ENCODE measurements at regions of chr22 and their contacts with region 1.

Region 1: GRCh38 chr22:36194971-36195370 is 6.6 kb downstream of the APOL4 start:
- DNase-seq: peak; percentile 83
- H3K4me3 Mint-ChIP-seq: no peak overlapping the region
- H3K27ac Mint-ChIP-seq: no peak overlapping the region
- H3K4me1 Mint-ChIP-seq: peaks cover 21% of the 10 kb centered on the region
- H3K27me3 Mint-ChIP-seq: peaks cover 11% of the 10 kb centered on the region

Region 2: GRCh38 chr22:36234919-36235318 is 39.9 kb after region 1 on chr22:
- intact Hi-C with region 1: no loop called
- DNase-seq: no peak
- H3K4me3 Mint-ChIP-seq: peak overlapping the region; percentile 91
- H3K27ac Mint-ChIP-seq: peak overlapping the region; percentile 81
- H3K4me1 Mint-ChIP-seq: peaks cover 50% of the 10 kb centered on the region
- H3K27me3 Mint-ChIP-seq: no peaks in the 10 kb centered on the region

Region 3: DNA sequence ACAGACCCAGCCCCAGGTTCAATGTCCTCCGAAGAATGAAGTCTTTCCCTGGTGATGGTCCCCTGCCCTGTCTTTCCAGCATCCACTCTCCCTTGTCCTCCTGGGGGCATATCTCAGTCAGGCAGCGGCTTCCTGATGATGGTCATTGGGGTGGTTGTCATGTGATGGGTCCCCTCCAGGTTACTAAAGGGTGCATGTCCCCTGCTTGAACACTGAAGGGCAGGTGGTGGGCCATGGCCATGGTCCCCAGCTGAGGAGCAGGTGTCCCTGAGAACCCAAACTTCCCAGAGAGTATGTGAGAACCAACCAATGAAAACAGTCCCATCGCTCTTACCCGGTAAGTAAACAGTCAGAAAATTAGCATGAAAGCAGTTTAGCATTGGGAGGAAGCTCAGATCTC is 72.1 kb after region 1 on chr22:
- intact Hi-C with region 1: no loop called
- DNase-seq: no peak
- H3K4me3 Mint-ChIP-seq: no peak overlapping the region
- H3K27ac Mint-ChIP-seq: no peak overlapping the region
- H3K4me1 Mint-ChIP-seq: no peaks in the 10 kb centered on the region
- H3K27me3 Mint-ChIP-seq: no peaks in the 10 kb centered on the region

Region 4: GRCh38 chr22:36277482-36278291 is 82.7 kb after region 1 on chr22:
- intact Hi-C with region 1: loop called (anchors 2 kb)
- DNase-seq: peak; percentile 87
- H3K4me3 Mint-ChIP-seq: no peak overlapping the region
- H3K27ac Mint-ChIP-seq: peak overlapping the region; percentile 9
- H3K4me1 Mint-ChIP-seq: peaks cover 10% of the 10 kb centered on the region
- H3K27me3 Mint-ChIP-seq: no peaks in the 10 kb centered on the region